ENCODE measurements at regions of chr1 and their contacts with region 1.

Region 1: DNA sequence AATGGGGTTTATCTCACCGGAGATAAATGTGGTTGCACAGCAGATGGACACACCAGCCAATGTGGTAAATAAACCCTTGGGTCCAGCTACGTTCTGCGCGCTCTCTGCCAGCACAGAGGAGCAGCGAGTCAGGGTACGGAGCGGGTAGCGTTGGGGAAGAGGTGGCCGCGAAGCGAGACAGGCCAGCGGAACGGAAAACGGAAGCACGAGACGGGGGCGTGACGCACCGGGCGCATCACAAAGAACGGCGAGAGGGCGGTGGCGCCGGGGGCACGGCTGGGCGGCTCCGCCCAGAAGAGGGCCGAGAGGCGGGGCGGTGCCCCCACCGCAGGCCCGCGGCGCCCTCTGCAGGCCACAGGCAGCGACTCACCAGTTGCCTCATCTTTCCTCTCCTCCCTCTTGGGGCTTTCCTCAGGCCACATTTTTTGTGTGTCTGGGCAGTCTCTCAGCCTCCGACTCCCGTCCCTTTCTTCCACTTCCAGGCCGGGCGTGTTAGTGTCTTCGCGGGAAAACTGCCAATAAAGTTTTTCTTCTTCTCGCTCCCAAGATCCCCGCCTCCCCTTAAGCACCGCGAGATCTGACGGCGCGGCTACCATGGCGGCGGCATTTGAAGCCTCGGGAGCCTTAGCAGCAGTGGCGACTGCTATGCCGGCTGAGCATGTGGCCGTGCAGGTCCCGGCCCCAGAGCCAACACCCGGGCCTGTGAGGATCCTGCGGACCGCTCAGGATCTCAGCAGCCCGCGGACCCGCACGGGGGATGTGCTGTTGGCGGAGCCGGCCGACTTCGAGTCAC is at the start of gene DDX20:
- DNase-seq: peak; percentile 96
- H3K4me3 Mint-ChIP-seq: peak within 1 kb of the TSS; percentile 84
- H3K27ac Mint-ChIP-seq: peak within 1 kb of the TSS; percentile 97
- H3K4me1 Mint-ChIP-seq: peaks cover 35% of the 10 kb centered on the region
- H3K27me3 Mint-ChIP-seq: no peaks in the 10 kb centered on the region
- total RNA-seq, gene DDX20: 14.2 to 15.9 TPM

Region 2: DNA sequence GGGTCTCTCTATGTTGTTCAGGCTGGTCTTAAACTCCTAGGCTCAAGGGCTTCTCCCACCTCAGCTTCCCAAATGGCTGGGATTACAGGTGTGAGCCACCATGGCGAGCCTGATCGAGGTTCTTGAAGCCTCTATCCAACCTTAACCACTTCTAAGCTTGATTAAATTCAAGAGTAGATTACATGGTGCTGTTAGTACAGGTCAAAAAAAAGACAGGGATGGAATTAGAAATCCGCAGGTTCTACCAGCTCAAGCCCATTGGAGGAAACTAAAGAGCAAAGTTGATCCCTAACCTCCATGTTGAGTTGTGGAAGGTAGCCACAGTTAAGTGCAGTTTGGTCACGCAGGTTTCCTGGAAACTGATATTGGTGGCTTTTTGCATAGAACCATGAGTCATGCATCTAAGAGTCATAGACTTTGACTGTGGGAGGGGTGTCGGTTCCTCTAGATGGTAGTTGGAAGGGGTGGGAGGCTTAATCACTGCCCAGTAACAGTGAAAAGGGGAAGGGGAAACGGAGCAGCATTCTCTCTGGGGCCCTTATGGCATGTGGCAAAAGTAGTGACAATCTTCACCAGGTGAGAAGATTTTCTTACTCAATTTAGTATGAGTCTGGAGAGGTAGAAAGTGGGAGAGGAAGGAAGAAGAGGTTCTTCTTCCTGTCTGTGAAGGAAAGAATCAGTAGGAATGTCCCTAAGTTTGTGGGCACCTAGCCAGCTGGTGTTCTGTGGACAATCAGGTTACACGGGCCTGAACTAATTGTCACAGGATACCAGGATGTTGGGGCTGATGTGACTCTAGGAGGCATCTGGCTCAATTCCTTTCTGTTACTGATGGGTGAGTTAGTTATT is 875.5 kb before region 1 on chr1:
- CTCF ChIA-PET with region 1: no interaction called
- POLR2A ChIA-PET with region 1: no interaction called
- intact Hi-C with region 1: loop called (anchors 5 kb)
- DNase-seq: peak; percentile 80
- H3K4me3 Mint-ChIP-seq: peak overlapping the region; percentile 69
- H3K27ac Mint-ChIP-seq: peak overlapping the region; percentile 99
- H3K4me1 Mint-ChIP-seq: peaks cover 62% of the 10 kb centered on the region
- H3K27me3 Mint-ChIP-seq: no peaks in the 10 kb centered on the region

Region 3: GRCh38 chr1:111275079-111275478 is 480.4 kb before region 1 on chr1:
- CTCF ChIA-PET with region 1: no interaction called
- POLR2A ChIA-PET with region 1: no interaction called
- intact Hi-C with region 1: loop called (anchors 5 kb)
- DNase-seq: peak; percentile 69
- H3K4me3 Mint-ChIP-seq: no peak overlapping the region
- H3K27ac Mint-ChIP-seq: peak overlapping the region; percentile 79
- H3K4me1 Mint-ChIP-seq: peaks cover 36% of the 10 kb centered on the region
- H3K27me3 Mint-ChIP-seq: peaks cover 21% of the 10 kb centered on the region

Region 4: DNA sequence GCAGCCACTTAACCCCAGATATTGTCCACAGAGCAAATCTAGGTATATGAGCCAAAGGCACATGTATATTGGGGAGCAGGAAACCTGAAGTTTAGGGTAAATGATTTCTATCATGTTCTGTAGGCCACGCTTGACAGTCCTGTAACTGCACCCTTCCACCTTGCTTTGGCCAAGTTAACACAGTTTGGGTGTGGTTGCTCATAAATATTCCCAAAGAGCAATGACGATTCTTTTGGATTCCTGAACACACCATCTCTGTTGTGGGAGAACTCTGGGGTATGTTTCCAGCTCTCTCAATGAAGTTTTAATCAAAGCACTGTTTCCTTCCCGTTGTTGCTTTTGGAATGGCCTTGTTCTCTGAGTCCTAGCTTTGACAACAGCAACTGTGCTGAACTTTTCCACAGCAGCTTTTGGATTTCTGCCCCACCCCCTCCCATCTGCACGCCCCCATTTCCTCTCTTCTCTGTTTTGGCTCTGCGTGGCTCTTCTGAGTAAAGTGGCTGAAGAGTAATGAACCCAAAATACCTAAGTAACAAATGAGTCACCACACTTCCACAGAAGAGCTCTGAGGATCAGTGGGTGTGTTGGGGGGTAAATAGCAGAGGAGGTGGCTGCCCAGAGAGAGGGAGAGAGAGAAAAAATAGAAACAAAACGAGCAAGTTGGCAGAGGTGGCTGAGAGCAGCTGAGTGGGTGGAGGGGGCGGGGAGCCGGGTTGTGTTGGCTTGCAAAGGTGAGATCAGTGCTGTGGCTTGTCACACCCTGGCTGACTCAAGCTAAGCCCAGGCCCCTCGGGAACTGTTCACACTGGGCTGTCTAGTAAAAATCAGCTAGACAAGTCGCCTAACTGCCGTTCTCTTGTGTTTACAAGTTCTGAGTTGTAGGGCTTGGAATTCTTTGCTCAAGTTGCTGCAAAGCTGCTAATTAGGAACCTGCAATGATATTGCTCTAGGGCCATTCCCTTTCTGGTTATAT is 162.9 kb before region 1 on chr1:
- CTCF ChIA-PET with region 1: no interaction called
- POLR2A ChIA-PET with region 1: no interaction called
- intact Hi-C with region 1: loop called (anchors 2 kb)
- DNase-seq: peak; percentile 99
- H3K4me3 Mint-ChIP-seq: peak overlapping the region; percentile 61
- H3K27ac Mint-ChIP-seq: peak overlapping the region; percentile 93
- H3K4me1 Mint-ChIP-seq: peaks cover 74% of the 10 kb centered on the region
- H3K27me3 Mint-ChIP-seq: no peaks in the 10 kb centered on the region

Region 5: DNA sequence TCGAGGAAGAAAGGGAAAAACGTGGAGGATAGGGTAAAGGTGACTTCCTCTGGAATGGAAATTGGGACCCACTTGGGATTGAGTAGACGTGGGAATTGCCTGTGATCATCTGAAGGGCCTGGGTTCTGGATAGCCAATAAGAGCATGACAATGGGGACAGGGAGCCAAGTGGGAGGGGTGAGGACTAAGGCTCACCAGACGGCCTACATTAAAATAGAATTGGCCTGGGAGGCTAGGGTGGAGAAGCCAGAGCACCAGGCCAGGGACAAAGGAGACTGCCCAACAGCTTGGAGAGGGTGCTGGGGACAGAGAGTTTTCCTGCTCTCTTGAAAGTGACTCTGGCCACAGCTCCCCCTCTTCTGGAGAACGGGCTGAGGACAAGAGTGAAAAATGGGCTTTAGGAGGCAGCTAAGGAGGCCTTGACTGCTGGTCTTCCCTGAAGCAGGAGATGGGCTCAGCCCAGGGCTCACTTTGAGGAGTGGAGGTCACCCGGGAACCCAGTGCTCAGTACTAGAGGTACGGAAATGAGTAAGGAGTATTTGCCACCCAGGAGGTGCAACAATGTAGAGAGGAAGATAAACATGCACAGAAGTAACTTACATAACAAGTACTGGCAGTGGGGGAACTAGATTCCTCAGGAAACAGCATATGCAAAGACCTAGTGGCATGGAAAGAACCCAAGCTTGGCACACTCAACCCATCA is 35.1 kb before region 1 on chr1:
- CTCF ChIA-PET with region 1: interaction called, 17 read pairs
- POLR2A ChIA-PET with region 1: no interaction called
- intact Hi-C with region 1: no loop called
- DNase-seq: no peak
- H3K4me3 Mint-ChIP-seq: no peak overlapping the region
- H3K27ac Mint-ChIP-seq: peak overlapping the region; percentile 38
- H3K4me1 Mint-ChIP-seq: peaks cover 18% of the 10 kb centered on the region
- H3K27me3 Mint-ChIP-seq: no peaks in the 10 kb centered on the region

Measured in activated CD4-positive, alpha-beta memory T cell treated with anti-CD3 and anti-CD28 coated beads for 36 hours (primary cell).